CD8-positive, alpha-beta T cell (primary cell): ENCODE measurements at regions of chrX and their contacts with region 1.

Region 1: DNA sequence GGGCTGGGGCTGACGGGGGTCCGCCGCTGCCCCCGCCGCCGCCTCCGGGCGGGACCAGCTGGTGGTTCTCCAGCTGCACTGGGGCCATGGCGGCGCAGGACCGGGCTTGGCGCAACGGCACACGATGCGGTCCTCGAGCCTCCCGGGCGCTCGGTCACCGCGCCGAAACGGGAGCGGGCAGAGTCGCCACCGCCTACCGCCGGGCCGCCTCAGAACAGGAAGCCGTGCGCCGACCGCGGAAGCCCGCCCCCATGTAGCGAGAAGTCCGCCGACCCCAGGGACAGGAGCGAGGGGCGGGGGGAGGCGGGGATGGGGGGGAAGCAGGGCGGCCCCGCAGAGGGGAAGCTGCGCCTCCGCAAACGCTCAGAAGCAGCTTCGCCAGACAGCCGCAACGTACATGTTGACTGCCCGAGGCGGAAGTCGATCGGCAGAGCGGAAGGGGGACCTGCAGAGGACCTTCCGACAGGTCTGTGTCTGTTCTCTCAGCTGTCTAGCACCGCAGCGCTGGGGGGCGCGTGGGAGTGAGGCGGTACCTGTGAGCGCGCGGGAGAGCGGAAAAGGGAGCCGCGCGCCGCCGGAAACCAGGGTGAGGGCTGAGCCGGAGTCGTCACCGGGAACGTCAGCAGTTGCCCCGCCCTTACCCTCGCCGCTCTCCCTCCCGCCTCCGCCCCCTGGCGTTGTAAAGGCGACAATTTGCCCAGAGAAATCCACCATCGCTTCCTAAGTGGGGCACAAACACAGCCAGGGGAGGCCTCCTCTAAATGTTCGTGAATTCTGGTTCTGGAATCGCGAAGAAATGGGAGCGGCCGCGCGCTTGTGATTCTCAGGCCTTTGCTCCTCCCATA is at the start of gene MED14:
- DNase-seq: peak; percentile 76 to 96 (median 95)
- ATAC-seq: peak; percentile 89
- H3K4me3 ChIP-seq: peak within 1 kb of the TSS; percentile 77 to 84
- H3K4me3 Mint-ChIP-seq: peak within 1 kb of the TSS; percentile 89
- H3K27ac ChIP-seq: peak within 1 kb of the TSS; percentile 98 to 99
- H3K27ac Mint-ChIP-seq: peak within 1 kb of the TSS; percentile 97
- H3K4me1 ChIP-seq: peaks cover 13% of the 10 kb centered on the region
- H3K4me1 Mint-ChIP-seq: peaks cover 52% of the 10 kb centered on the region
- H3K27me3 ChIP-seq: no peaks in the 10 kb centered on the region
- H3K27me3 Mint-ChIP-seq: no peaks in the 10 kb centered on the region
- CTCF ChIP-seq: peak; percentile 36
- total RNA-seq, gene MED14: 69.7 to 70.2 TPM

Region 2: GRCh38 chrX:38803586-38804431 is 1931.7 kb before region 1 on chrX:
- CTCF ChIA-PET with region 1: no interaction called
- POLR2A ChIA-PET with region 1: no interaction called
- intact Hi-C with region 1: loop called in 1 of 2 experiments (anchors 5 kb)
- DNase-seq: peak in 8 of 9 experiments; percentile 29 to 77 (median 54)
- ATAC-seq: peak; percentile 36
- H3K4me3 ChIP-seq: peak overlapping the region; percentile 80 to 84
- H3K4me3 Mint-ChIP-seq: peak overlapping the region; percentile 95
- H3K27ac ChIP-seq: peak overlapping the region; percentile 71 to 77
- H3K27ac Mint-ChIP-seq: peak overlapping the region; percentile 98
- H3K4me1 ChIP-seq: peaks cover 7% of the 10 kb centered on the region
- H3K4me1 Mint-ChIP-seq: peaks cover 32% of the 10 kb centered on the region
- H3K27me3 ChIP-seq: no peaks in the 10 kb centered on the region
- H3K27me3 Mint-ChIP-seq: no peaks in the 10 kb centered on the region
- CTCF ChIP-seq: no peak

Region 3: GRCh38 chrX:40434947-40435346 is 300.6 kb before region 1 on chrX:
- CTCF ChIA-PET with region 1: no interaction called
- POLR2A ChIA-PET with region 1: no interaction called
- intact Hi-C with region 1: no loop called
- DNase-seq: no peak
- ATAC-seq: no peak
- H3K4me3 ChIP-seq: no peak overlapping the region
- H3K4me3 Mint-ChIP-seq: no peak overlapping the region
- H3K27ac ChIP-seq: no peak overlapping the region
- H3K27ac Mint-ChIP-seq: no peak overlapping the region
- H3K4me1 ChIP-seq: no peaks in the 10 kb centered on the region
- H3K4me1 Mint-ChIP-seq: peaks cover 2% of the 10 kb centered on the region
- H3K27me3 ChIP-seq: no peaks in the 10 kb centered on the region
- H3K27me3 Mint-ChIP-seq: no peaks in the 10 kb centered on the region
- CTCF ChIP-seq: no peak

Region 4: DNA sequence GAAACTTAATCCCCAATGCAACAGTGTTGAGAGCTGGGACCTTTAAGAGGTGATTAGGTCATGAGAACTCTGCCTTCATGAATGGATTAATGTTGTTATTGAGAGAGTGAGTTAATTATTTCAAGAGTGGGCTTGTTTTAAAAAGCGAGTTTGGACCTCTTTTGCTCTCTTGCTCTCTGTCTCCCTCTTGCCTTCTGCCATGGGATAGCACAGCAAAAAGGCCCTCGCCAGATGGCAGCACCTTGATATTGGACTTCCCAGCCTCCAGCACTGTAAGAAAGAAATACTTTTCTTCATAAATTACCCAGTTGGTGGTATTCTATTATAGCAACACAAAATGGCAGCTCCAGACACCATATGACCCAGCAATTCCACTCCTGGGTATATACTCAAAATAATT is 161.8 kb before region 1 on chrX:
- CTCF ChIA-PET with region 1: no interaction called
- POLR2A ChIA-PET with region 1: no interaction called
- intact Hi-C with region 1: loop called in 1 of 2 experiments (anchors 2 kb)
- DNase-seq: peak in 4 of 9 experiments; percentile 19 to 59 (median 38)
- ATAC-seq: peak; percentile 42
- H3K4me3 ChIP-seq: no peak overlapping the region
- H3K4me3 Mint-ChIP-seq: no peak overlapping the region
- H3K27ac ChIP-seq: no peak overlapping the region
- H3K27ac Mint-ChIP-seq: no peak overlapping the region
- H3K4me1 ChIP-seq: peaks cover 6% of the 10 kb centered on the region
- H3K4me1 Mint-ChIP-seq: peaks cover 9% of the 10 kb centered on the region
- H3K27me3 ChIP-seq: no peaks in the 10 kb centered on the region
- H3K27me3 Mint-ChIP-seq: no peaks in the 10 kb centered on the region
- CTCF ChIP-seq: peak; percentile 31

Region 5: GRCh38 chrX:40647307-40648197 is 88.0 kb before region 1 on chrX and contains the start of gene CXorf38:
- CTCF ChIA-PET with region 1: no interaction called
- POLR2A ChIA-PET with region 1: interaction called, 3 read pairs
- intact Hi-C with region 1: loop called (anchors 1 to 2 kb)
- DNase-seq: peak; percentile 82 to 98 (median 91)
- ATAC-seq: peak; percentile 74
- H3K4me3 ChIP-seq: peak within 1 kb of the TSS; percentile 63 to 72
- H3K4me3 Mint-ChIP-seq: peak within 1 kb of the TSS; percentile 95
- H3K27ac ChIP-seq: peak within 1 kb of the TSS; percentile 65 to 87
- H3K27ac Mint-ChIP-seq: peak within 1 kb of the TSS; percentile 96
- H3K4me1 ChIP-seq: peaks cover 17% of the 10 kb centered on the region
- H3K4me1 Mint-ChIP-seq: peaks cover 33% of the 10 kb centered on the region
- H3K27me3 ChIP-seq: no peaks in the 10 kb centered on the region
- H3K27me3 Mint-ChIP-seq: no peaks in the 10 kb centered on the region
- CTCF ChIP-seq: no peak
- total RNA-seq, gene CXorf38: 10.6 to 11.0 TPM

Region 6: GRCh38 chrX:40685362-40685918 is 50.1 kb before region 1 on chrX:
- CTCF ChIA-PET with region 1: no interaction called
- POLR2A ChIA-PET with region 1: no interaction called
- intact Hi-C with region 1: no loop called
- DNase-seq: no peak
- ATAC-seq: no peak
- H3K4me3 ChIP-seq: no peak overlapping the region
- H3K4me3 Mint-ChIP-seq: no peak overlapping the region
- H3K27ac ChIP-seq: no peak overlapping the region
- H3K27ac Mint-ChIP-seq: peak overlapping the region; percentile 27
- H3K4me1 ChIP-seq: no peaks in the 10 kb centered on the region
- H3K4me1 Mint-ChIP-seq: peaks cover 18% of the 10 kb centered on the region
- H3K27me3 ChIP-seq: no peaks in the 10 kb centered on the region
- H3K27me3 Mint-ChIP-seq: no peaks in the 10 kb centered on the region
- CTCF ChIP-seq: no peak

Region 7: GRCh38 chrX:40719218-40719617 is 16.3 kb before region 1 on chrX:
- CTCF ChIA-PET with region 1: interaction called, 3 read pairs
- POLR2A ChIA-PET with region 1: no interaction called
- intact Hi-C with region 1: loop called in 1 of 2 experiments (anchors 2 kb)
- DNase-seq: no peak
- ATAC-seq: no peak
- H3K4me3 ChIP-seq: no peak overlapping the region
- H3K4me3 Mint-ChIP-seq: no peak overlapping the region
- H3K27ac ChIP-seq: no peak overlapping the region
- H3K27ac Mint-ChIP-seq: peak overlapping the region; percentile 71
- H3K4me1 ChIP-seq: peaks cover 9% of the 10 kb centered on the region
- H3K4me1 Mint-ChIP-seq: peaks cover 57% of the 10 kb centered on the region
- H3K27me3 ChIP-seq: no peaks in the 10 kb centered on the region
- H3K27me3 Mint-ChIP-seq: no peaks in the 10 kb centered on the region
- CTCF ChIP-seq: no peak

Region 8: GRCh38 chrX:40809210-40809609 is 73.7 kb after region 1 on chrX:
- CTCF ChIA-PET with region 1: no interaction called
- POLR2A ChIA-PET with region 1: no interaction called
- intact Hi-C with region 1: no loop called
- DNase-seq: no peak
- ATAC-seq: no peak
- H3K4me3 ChIP-seq: no peak overlapping the region
- H3K4me3 Mint-ChIP-seq: no peak overlapping the region
- H3K27ac ChIP-seq: no peak overlapping the region
- H3K27ac Mint-ChIP-seq: no peak overlapping the region
- H3K4me1 ChIP-seq: no peaks in the 10 kb centered on the region
- H3K4me1 Mint-ChIP-seq: no peaks in the 10 kb centered on the region
- H3K27me3 ChIP-seq: no peaks in the 10 kb centered on the region
- H3K27me3 Mint-ChIP-seq: no peaks in the 10 kb centered on the region
- CTCF ChIP-seq: no peak

Region 9: DNA sequence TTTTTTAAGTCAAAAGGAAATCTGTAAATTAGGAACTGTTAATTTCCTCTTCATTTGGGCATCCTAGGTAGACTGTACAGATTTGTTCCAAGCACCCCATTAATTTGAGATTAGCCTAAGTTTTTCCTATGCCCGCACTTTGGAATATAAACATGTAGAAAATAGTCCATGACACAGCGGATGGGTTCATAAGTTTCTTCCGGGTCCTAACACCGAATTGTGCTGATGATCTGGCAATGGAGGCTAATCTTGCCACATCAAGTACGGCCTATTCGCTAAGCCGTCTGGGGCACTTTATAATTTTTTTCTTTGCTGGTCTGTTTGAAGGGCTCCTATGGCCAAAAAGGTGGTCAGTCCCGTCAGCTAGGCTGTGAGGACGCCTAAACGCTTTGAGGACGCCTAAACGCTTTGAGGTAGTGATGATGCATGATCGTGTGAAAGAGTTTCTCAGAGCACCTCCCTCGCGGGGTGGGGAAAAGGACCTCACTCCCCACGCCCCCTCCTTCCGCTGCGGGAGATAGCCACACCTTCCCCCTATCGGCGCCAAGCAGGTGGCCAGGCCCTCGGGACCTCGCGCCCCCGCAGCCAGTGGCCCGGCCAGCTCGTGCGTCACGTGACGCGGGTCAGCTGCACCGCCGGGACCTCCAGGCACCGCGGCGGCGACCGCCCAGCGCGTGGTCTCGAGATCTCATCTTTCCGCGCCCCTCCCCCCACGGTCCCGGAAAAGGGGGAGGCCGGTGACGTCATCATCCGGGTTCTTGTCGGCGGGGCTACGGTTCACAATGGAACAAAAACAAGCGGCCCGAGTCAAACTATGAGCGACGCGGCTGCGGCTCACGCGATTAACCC is 348.7 kb after region 1 on chrX:
- CTCF ChIA-PET with region 1: no interaction called
- POLR2A ChIA-PET with region 1: interaction called, 9 read pairs
- intact Hi-C with region 1: loop called (anchors 1 kb)
- DNase-seq: peak; percentile 88 to 100 (median 96)
- ATAC-seq: peak; percentile 66
- H3K4me3 ChIP-seq: peak overlapping the region; percentile 68 to 95
- H3K4me3 Mint-ChIP-seq: peak overlapping the region; percentile 95
- H3K27ac ChIP-seq: peak overlapping the region; percentile 98 to 100
- H3K27ac Mint-ChIP-seq: peak overlapping the region; percentile 100
- H3K4me1 ChIP-seq: peaks cover 19% of the 10 kb centered on the region
- H3K4me1 Mint-ChIP-seq: peaks cover 24% of the 10 kb centered on the region
- H3K27me3 ChIP-seq: no peaks in the 10 kb centered on the region
- H3K27me3 Mint-ChIP-seq: no peaks in the 10 kb centered on the region
- CTCF ChIP-seq: no peak

Region 10: DNA sequence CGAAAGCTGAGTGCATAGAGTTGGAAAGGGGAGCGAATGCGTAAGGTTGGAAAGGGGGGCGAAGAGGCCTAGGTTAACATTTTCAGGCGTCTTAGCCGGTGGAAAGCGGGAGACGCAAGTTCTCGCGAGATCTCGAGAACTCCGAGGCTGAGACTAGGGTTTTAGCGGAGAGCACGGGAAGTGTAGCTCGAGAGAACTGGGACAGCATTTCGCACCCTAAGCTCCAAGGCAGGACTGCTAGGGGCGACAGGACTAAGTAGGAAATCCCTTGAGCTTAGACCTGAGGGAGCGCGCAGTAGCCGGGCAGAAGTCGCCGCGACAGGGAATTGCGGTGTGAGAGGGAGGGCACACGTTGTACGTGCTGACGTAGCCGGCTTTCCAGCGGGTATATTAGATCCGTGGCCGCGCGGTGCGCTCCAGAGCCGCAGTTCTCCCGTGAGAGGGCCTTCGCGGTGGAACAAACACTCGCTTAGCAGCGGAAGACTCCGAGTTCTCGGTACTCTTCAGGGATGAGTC is 598.3 kb after region 1 on chrX and contains the start of gene DDX3X:
- CTCF ChIA-PET with region 1: no interaction called
- POLR2A ChIA-PET with region 1: no interaction called
- intact Hi-C with region 1: loop called (anchors 5 kb)
- DNase-seq: peak; percentile 58 to 95 (median 81)
- ATAC-seq: peak; percentile 55
- H3K4me3 ChIP-seq: peak within 1 kb of the TSS; percentile 93 to 100
- H3K4me3 Mint-ChIP-seq: peak within 1 kb of the TSS; percentile 95
- H3K27ac ChIP-seq: peak within 1 kb of the TSS; percentile 99
- H3K27ac Mint-ChIP-seq: peak within 1 kb of the TSS; percentile 99
- H3K4me1 ChIP-seq: peaks cover 14% of the 10 kb centered on the region
- H3K4me1 Mint-ChIP-seq: peaks cover 33% of the 10 kb centered on the region
- H3K27me3 ChIP-seq: no peaks in the 10 kb centered on the region
- H3K27me3 Mint-ChIP-seq: no peaks in the 10 kb centered on the region
- CTCF ChIP-seq: peak; percentile 23
- total RNA-seq, gene DDX3X: 643 to 648 TPM